GM12878 (cell line): ENCODE measurements at regions of chr14 and their contacts with region 1.

Region 1: DNA sequence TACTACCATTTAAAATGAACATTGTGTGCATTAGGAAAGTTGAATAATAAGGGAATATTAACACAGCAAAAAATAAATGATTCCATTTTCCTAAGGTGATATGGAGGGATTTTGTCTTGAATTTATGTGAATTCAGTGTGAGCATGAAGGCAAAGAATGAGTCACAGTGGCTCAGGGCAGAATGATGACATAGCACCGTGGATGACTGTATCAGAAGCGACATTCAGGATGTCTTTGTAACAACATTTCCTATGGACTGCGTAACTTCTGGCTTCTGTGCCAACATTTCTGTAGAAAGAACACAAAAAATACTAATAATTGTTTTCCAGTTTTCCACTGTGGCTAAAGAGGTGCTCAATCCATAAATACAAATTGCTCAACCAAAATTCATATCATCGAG is 54.6 kb downstream of the TTC8 start:
- DNase-seq: no peak
- ATAC-seq: no peak
- H3K4me3 ChIP-seq: no peak overlapping the region
- H3K27ac ChIP-seq: no peak overlapping the region
- H3K4me1 ChIP-seq: no peaks in the 10 kb centered on the region
- H3K27me3 ChIP-seq: no peaks in the 10 kb centered on the region
- CTCF ChIP-seq: no peak
- EP300 ChIP-seq: no peak
- POLR2A ChIP-seq: no peak
- RAD21 ChIP-seq: no peak

Region 2: DNA sequence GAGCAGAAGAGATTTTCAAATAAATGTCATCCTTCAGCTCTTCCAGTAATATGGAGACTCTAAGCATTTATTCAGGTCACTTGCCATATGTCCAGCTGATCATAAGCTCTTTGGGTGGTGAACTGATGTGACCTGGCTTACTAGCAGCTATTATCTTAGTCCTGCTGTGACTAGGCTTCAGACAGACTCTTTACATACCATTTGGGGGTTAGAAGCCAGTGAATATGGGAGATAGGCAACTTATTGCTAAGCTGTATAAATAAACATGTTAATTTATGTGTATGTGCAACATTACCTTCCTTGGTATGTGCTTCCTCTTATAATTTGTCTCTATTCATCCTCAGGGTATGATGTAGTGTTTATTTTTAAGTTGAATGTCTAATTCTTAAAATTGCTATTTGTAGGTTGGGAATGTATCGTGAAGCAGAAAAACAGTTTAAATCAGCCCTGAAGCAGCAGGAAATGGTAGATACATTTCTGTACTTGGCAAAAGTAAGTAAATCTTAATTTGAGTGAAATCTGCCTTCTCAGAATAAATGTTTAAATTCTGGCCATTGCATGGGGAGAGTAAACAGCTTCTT is 22.1 kb before region 1 on chr14:
- CTCF ChIA-PET with region 1: no interaction called
- POLR2A ChIA-PET with region 1: no interaction called
- RAD21 ChIA-PET with region 1: no interaction called
- SMC1A ChIA-PET with region 1: no interaction called
- in situ Hi-C with region 1: no loop called
- intact Hi-C with region 1: no loop called
- DNase-seq: no peak
- ATAC-seq: no peak
- H3K4me3 ChIP-seq: no peak overlapping the region
- H3K27ac ChIP-seq: no peak overlapping the region
- H3K4me1 ChIP-seq: no peaks in the 10 kb centered on the region
- H3K27me3 ChIP-seq: no peaks in the 10 kb centered on the region
- CTCF ChIP-seq: no peak
- EP300 ChIP-seq: no peak
- POLR2A ChIP-seq: no peak
- RAD21 ChIP-seq: no peak

Region 3: GRCh38 chr14:88868558-88869159 is 10.4 kb before region 1 on chr14:
- CTCF ChIA-PET with region 1: interaction called, 3 read pairs
- POLR2A ChIA-PET with region 1: no interaction called
- RAD21 ChIA-PET with region 1: no interaction called
- SMC1A ChIA-PET with region 1: interaction called, 10 read pairs
- in situ Hi-C with region 1: no loop called
- intact Hi-C with region 1: no loop called
- DNase-seq: no peak
- ATAC-seq: peak; percentile 74
- H3K4me3 ChIP-seq: no peak overlapping the region
- H3K27ac ChIP-seq: no peak overlapping the region
- H3K4me1 ChIP-seq: no peaks in the 10 kb centered on the region
- H3K27me3 ChIP-seq: no peaks in the 10 kb centered on the region
- CTCF ChIP-seq: peak; percentile 27 to 47 (median 35); a peak in 4 of 6 replicates
- EP300 ChIP-seq: no peak
- POLR2A ChIP-seq: no peak
- RAD21 ChIP-seq: peak; percentile 75

Region 4: DNA sequence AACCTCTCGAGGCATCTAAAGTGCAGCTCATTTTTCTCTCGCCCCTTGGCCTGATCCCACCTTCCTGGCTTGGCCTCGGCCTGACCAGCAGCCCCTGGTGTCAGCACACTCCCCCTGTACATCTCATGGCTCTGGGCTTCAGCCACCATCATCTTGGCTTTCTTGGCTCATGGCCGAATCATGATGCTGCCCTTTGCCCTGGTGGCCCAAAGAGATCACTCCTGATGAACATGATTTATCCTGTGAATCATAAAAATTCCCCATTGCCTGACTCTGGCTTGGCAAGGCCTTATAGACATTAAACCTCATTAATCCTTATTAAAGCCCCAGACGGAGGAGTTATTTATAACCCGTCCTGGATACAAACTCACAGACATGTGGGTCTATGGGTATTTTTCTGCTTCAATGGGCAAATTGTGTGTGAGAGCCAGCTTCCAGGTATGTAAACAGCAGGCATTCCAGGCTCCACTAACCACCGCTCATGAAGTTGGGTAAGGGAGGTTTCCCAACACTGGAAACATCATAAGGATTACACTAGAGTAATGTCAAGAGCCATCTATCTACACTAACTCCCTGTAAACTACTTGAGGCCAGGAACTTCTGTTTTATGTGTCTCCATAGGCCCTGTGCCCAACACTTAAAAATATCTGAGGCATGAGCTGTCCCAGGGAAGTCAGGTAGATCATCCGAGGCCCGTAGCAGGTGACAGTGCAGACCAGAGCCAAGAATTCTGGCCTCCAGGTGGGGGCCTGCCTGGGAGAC is 116.6 kb after region 1 on chr14:
- CTCF ChIA-PET with region 1: no interaction called
- POLR2A ChIA-PET with region 1: no interaction called
- RAD21 ChIA-PET with region 1: no interaction called
- SMC1A ChIA-PET with region 1: no interaction called
- in situ Hi-C with region 1: no loop called
- intact Hi-C with region 1: no loop called
- DNase-seq: no peak
- ATAC-seq: no peak
- H3K4me3 ChIP-seq: no peak overlapping the region
- H3K27ac ChIP-seq: no peak overlapping the region
- H3K4me1 ChIP-seq: peaks cover 4% of the 10 kb centered on the region; the same call in 1 of the 2 replicates
- H3K27me3 ChIP-seq: no peaks in the 10 kb centered on the region; a peak in 1 of 4 replicates
- CTCF ChIP-seq: no peak
- EP300 ChIP-seq: no peak
- POLR2A ChIP-seq: no peak
- RAD21 ChIP-seq: no peak